Sigmoid colon (tissue), 7 donors: ENCODE measurements at regions of chr5 and their contacts with region 1.

Region 1: GRCh38 chr5:176647030-176647866 is at the start of gene TSPAN17:
- DNase-seq: peak; percentile 100
- H3K4me3 ChIP-seq: peak within 1 kb of the TSS; percentile 61 to 85 (median 70)
- H3K27ac ChIP-seq: peak within 1 kb of the TSS; percentile 79 to 82 (median 82)
- H3K4me1 ChIP-seq: peaks cover 0 to 22% (median 20%) of the 10 kb centered on the region in 4 donors
- H3K27me3 ChIP-seq: no peaks in the 10 kb centered on the region
- CTCF ChIP-seq: peak in 1 of 4 experiments; percentile 11
- EP300 ChIP-seq: peak in 1 of 4 donors; percentile 9
- POLR2A ChIP-seq: peak; percentile 11 to 25
- total RNA-seq, gene TSPAN17: 7.4 to 22.4 (median 9.7) TPM

Region 2: DNA sequence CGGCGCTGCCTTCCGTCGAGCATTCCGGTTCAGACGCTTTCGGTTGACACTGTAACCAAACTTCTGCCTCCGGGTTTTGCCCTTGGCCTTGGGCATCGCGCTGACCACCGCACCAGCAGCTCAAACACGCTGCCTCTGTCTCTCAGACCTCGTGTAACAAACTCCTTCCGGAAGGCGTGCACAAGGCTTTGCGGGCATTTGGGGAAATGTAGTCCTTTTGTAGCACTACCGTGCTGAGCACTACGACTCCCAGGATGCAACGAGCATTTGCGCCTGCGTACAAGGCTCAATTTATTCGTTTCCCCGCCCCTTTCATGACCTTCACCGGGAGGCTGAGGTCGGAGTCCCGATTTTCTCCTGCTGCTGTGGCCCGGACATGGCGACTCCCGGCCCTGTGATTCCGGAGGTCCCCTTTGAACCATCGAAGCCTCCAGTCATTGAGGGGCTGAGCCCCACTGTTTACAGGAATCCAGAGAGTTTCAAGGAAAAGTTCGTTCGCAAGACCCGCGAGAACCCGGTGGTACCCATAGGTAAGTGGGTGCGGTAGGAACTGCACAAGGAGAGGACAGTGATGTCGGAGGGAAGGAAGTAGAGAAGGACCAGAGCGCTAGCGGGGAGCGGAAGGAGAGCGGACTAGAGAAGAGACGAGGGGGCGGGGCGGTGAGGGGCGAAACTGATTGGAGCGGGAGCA is 258.7 kb before region 1 on chr5 and contains the starts of genes HIGD2A and NOP16:
- intact Hi-C with region 1: loop called (anchors 10 kb)
- DNase-seq: peak; percentile 100
- H3K4me3 ChIP-seq: peak within 1 kb of the TSS; percentile 57 to 65 (median 61)
- H3K27ac ChIP-seq: peak within 1 kb of the TSS; percentile 88 to 94 (median 93)
- H3K4me1 ChIP-seq: peaks cover 0 to 30% (median 25%) of the 10 kb centered on the region in 4 donors
- H3K27me3 ChIP-seq: no peaks in the 10 kb centered on the region
- CTCF ChIP-seq: peak in 1 of 4 experiments; percentile 36
- EP300 ChIP-seq: no peak
- POLR2A ChIP-seq: no peak
- total RNA-seq, gene HIGD2A: 201 to 249 (median 235) TPM
- total RNA-seq, gene NOP16: 4.4 to 17.8 (median 9.6) TPM

Region 3: GRCh38 chr5:176530983-176531821 is 116.0 kb before region 1 on chr5:
- intact Hi-C with region 1: no loop called
- DNase-seq: peak; percentile 84
- H3K4me3 ChIP-seq: no peak overlapping the region
- H3K27ac ChIP-seq: peak overlapping the region; percentile 29 to 97 (median 75)
- H3K4me1 ChIP-seq: peaks cover 0 to 64% (median 58%) of the 10 kb centered on the region in 4 donors
- H3K27me3 ChIP-seq: no peaks in the 10 kb centered on the region
- CTCF ChIP-seq: no peak
- EP300 ChIP-seq: no peak
- POLR2A ChIP-seq: no peak

Region 4: DNA sequence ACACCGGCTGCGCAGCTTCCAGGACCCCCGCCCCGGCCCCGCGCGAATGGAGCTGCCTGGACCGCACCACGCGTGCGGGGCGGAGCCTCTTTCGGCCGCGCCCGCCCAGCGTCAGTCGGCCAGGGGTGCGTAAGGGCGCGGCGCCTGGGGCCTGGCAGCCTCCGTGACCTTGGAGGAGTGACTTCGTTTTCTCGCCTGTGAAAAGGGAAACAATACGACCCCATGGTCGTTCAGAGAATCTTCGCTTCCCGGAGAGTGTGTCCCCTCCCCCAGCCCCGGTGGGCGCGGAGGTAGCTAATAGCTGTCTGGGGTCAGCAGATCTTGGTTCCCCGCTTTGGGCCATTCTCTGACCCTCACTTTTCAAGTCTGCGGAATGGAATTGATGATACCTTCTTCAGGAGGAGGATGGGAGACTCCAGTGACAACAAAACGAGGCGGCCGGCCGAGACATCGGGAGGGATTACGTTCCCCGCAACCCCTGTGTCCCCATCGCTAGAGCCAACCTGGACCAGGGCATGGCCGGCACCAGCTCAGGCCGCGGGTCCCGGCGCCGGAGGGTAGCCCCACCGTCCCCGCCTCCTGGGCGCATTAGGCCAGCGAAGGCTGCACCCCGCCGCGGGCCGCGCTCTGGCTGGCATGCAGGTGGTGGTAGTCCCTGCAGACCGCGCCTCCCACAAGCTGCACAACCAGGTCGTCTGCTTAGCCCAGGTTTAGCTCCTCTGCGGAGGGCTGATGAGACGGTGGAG is 103.6 kb before region 1 on chr5:
- intact Hi-C with region 1: loop called (anchors 1 kb)
- DNase-seq: peak; percentile 84
- H3K4me3 ChIP-seq: peak overlapping the region; percentile 47 to 82 (median 68)
- H3K27ac ChIP-seq: peak overlapping the region; percentile 81 to 91 (median 87)
- H3K4me1 ChIP-seq: peaks cover 0 to 40% (median 21%) of the 10 kb centered on the region in 4 donors
- H3K27me3 ChIP-seq: no peaks in the 10 kb centered on the region
- CTCF ChIP-seq: no peak
- EP300 ChIP-seq: no peak
- POLR2A ChIP-seq: peak in 1 of 2 donors; percentile 84

Region 5: GRCh38 chr5:176573564-176574296 is 73.5 kb before region 1 on chr5:
- intact Hi-C with region 1: loop called (anchors 10 kb)
- DNase-seq: peak; percentile 73
- H3K4me3 ChIP-seq: no peak overlapping the region
- H3K27ac ChIP-seq: no peak overlapping the region
- H3K4me1 ChIP-seq: no peaks in the 10 kb centered on the region
- H3K27me3 ChIP-seq: peaks cover 0 to 17% (median 0%) of the 10 kb centered on the region in 3 donors
- CTCF ChIP-seq: peak; percentile 24 to 76 (median 60)
- EP300 ChIP-seq: no peak
- POLR2A ChIP-seq: no peak

Region 6: DNA sequence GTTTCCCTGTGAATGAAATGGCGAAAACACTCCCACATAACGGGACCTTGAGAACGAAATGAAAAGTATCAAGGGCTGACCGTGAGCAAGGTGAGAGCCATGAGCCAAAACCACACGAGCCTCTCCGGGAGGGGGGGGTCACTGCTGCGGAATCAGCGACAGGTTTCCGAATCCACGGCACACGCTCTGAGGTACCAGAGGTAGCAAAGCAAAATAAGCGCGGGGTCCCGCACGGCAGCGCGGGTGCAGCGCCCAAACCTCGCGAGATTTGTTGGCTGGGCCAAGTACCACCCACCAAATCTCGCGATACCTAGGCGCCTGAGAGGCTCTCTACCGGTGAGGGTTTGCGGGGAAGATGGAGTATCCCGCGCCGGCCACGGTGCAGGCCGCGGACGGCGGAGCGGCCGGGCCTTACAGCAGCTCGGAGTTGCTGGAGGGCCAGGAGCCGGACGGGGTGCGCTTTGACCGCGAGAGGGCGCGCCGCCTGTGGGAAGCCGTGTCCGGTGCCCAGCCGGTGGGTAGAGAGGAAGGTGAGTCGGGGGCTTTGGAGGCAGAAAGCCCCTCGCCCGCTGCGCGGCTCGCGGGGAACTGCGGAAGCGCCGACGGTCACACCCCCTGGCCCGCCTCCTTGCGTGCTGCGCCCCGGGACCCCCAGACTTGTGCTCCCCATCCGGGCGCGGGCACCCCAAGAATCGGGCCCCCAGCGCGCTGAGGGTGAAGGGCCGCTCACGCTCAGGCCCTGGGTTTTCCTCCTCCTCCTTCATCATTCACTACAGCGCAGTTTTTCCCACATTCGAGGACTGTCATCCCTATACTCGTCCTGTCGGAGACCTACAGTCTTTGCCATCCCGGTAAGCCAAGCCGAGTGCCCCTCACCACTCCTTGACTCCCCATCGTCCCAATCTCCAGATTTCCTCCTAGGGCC is 375.4 kb after region 1 on chr5 and contains the start of gene ZNF346:
- intact Hi-C with region 1: loop called (anchors 10 kb)
- DNase-seq: peak; percentile 97
- H3K4me3 ChIP-seq: peak within 1 kb of the TSS; percentile 85 to 95 (median 92)
- H3K27ac ChIP-seq: peak within 1 kb of the TSS; percentile 89 to 93 (median 92)
- H3K4me1 ChIP-seq: peaks cover 0 to 36% (median 25%) of the 10 kb centered on the region in 4 donors
- H3K27me3 ChIP-seq: no peaks in the 10 kb centered on the region
- CTCF ChIP-seq: peak in 3 of 4 experiments; percentile 33 to 58 (median 46)
- EP300 ChIP-seq: no peak
- POLR2A ChIP-seq: peak in 1 of 2 donors; percentile 30
- total RNA-seq, gene ZNF346: 12.5 to 21.9 (median 15.0) TPM